ENCODE measurements at regions of chr6 and their contacts with region 1.

Region 1: GRCh38 chr6:20401205-20402091 is at the start of gene E2F3:
- DNase-seq: peak; percentile 100
- H3K4me3 ChIP-seq: peak within 1 kb of the TSS; percentile 69 to 78 (median 72)
- H3K27ac ChIP-seq: peak within 1 kb of the TSS; percentile 56
- H3K4me1 ChIP-seq: peaks cover 7% of the 10 kb centered on the region
- H3K27me3 ChIP-seq: no peaks in the 10 kb centered on the region
- CTCF ChIP-seq: no peak
- POLR2A ChIP-seq: peak; percentile 52
- total RNA-seq, gene E2F3: 21.2 and 22.0 TPM in 2 replicates

Region 2: GRCh38 chr6:20212392-20213217 is 188.8 kb before region 1 on chr6 and contains the start of gene MBOAT1:
- CTCF ChIA-PET with region 1: interaction called, 4 read pairs
- POLR2A ChIA-PET with region 1: no interaction called
- dilution Hi-C with region 1: no loop called
- intact Hi-C with region 1: loop called (anchors 2 kb)
- DNase-seq: peak; percentile 92
- H3K4me3 ChIP-seq: peak within 1 kb of the TSS; percentile 21 to 80 (median 58)
- H3K27ac ChIP-seq: peak within 1 kb of the TSS; percentile 55
- H3K4me1 ChIP-seq: peaks cover 15% of the 10 kb centered on the region
- H3K27me3 ChIP-seq: no peaks in the 10 kb centered on the region
- CTCF ChIP-seq: peak in 1 of 2 donors; percentile 22
- POLR2A ChIP-seq: peak; percentile 72
- total RNA-seq, gene MBOAT1: 4.8 and 5.4 TPM in 2 replicates

Region 3: GRCh38 chr6:20377623-20378265 is 23.7 kb before region 1 on chr6:
- CTCF ChIA-PET with region 1: interaction called, 32 read pairs
- POLR2A ChIA-PET with region 1: interaction called, 8 read pairs
- dilution Hi-C with region 1: no loop called
- intact Hi-C with region 1: loop called (anchors 1 kb)
- DNase-seq: peak; percentile 88
- H3K4me3 ChIP-seq: peak overlapping the region in 1 of 3 experiments; percentile 3
- H3K27ac ChIP-seq: peak overlapping the region; percentile 68
- H3K4me1 ChIP-seq: peaks cover 32% of the 10 kb centered on the region
- H3K27me3 ChIP-seq: no peaks in the 10 kb centered on the region
- CTCF ChIP-seq: no peak
- POLR2A ChIP-seq: no peak

Region 4: DNA sequence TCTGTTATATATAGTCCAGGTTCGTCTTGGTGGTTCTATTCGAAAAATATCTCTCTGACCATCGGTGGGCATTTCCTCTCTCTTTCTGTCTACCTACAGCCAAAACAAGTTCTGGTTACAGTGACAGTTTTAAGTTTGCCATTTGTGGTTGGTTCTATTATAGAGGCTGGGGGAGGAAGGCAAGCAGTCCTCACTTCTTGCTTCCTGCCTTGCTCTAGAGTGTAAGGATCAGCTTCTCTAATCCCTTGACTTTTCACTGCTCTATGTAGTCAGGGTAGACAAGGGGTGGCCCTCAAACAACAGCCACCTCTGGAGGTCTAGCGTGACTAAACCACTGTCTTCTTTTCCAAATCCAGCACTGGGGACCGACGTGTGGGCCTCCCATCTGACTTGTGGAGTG is 16.4 kb after region 1 on chr6:
- CTCF ChIA-PET with region 1: interaction called, 16 read pairs
- POLR2A ChIA-PET with region 1: no interaction called
- dilution Hi-C with region 1: no loop called
- intact Hi-C with region 1: no loop called
- DNase-seq: no peak
- H3K4me3 ChIP-seq: no peak overlapping the region
- H3K27ac ChIP-seq: no peak overlapping the region
- H3K4me1 ChIP-seq: no peaks in the 10 kb centered on the region
- H3K27me3 ChIP-seq: no peaks in the 10 kb centered on the region
- CTCF ChIP-seq: no peak
- POLR2A ChIP-seq: no peak

Region 5: GRCh38 chr6:20534295-20535262 is 133.1 kb after region 1 on chr6 and contains the start of gene CDKAL1:
- CTCF ChIA-PET with region 1: interaction called, 27 read pairs
- POLR2A ChIA-PET with region 1: no interaction called
- dilution Hi-C with region 1: no loop called
- intact Hi-C with region 1: no loop called
- DNase-seq: peak; percentile 94
- H3K4me3 ChIP-seq: peak within 1 kb of the TSS; percentile 75 to 99 (median 90)
- H3K27ac ChIP-seq: peak within 1 kb of the TSS; percentile 77
- H3K4me1 ChIP-seq: peaks cover 10% of the 10 kb centered on the region
- H3K27me3 ChIP-seq: no peaks in the 10 kb centered on the region
- CTCF ChIP-seq: no peak
- POLR2A ChIP-seq: peak; percentile 89
- total RNA-seq, gene CDKAL1: 17.3 and 20.5 TPM in 2 replicates

Region 6: DNA sequence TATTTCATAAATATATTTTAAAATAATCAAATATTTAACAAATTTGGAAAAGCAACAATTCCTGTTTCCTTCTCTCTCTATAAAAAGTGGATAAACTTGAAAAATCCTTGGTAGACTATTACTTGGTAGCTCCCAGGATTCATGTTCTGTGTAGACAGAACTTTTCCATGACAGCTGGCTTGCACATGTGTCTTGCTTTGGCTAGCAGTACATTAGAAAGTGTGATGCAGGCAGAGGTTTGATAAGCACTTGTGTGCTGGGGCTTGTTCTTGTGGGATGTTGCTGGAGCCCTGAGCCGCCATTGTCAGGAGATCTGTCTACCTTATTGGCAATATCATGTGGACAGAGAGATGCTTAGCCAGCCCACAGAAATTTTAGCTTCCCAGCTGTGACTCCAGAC is 460.0 kb after region 1 on chr6:
- CTCF ChIA-PET with region 1: no interaction called
- POLR2A ChIA-PET with region 1: no interaction called
- dilution Hi-C with region 1: no loop called
- intact Hi-C with region 1: no loop called
- DNase-seq: no peak
- H3K4me3 ChIP-seq: no peak overlapping the region
- H3K27ac ChIP-seq: no peak overlapping the region
- H3K4me1 ChIP-seq: no peaks in the 10 kb centered on the region
- H3K27me3 ChIP-seq: no peaks in the 10 kb centered on the region
- CTCF ChIP-seq: no peak
- POLR2A ChIP-seq: no peak

Measured in endothelial cell of umbilical vein (primary cell).